B cell (primary cell): ENCODE measurements at regions of chr11 and their contacts with region 1.

Region 1: DNA sequence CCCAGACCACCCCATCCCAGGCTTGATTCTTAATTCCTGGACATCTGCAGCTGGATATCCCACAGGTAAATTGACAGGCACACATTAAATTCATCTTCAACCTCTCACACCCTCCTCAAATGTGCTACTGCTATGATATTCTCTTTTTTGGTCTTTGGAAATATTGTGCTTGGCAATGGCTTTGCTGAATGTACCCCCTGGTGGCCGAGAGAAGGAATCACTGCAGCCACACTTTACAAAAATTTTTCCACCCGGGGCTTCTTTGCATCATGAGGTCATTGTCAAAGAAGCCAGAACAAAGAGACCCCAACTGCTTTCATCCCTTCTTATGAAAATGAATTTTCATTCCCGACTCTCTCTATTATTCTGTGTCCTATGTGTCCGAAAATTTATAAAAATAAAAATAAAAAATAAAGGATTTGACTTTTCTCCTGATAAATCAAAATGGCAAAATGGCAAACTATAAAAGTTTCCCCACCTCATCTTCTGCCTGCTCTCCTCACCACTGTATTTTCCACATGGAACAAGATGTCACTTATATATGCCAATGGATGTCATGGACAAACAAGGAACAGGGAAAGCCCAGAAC is 15.0 kb upstream of the CYB5R2 start:
- DNase-seq: peak; percentile 48
- ATAC-seq: peak; percentile 54
- H3K4me3 ChIP-seq: no peak overlapping the region
- H3K4me3 Mint-ChIP-seq: no peak overlapping the region
- H3K27ac ChIP-seq: no peak overlapping the region
- H3K27ac Mint-ChIP-seq: no peak overlapping the region
- H3K4me1 ChIP-seq: no peaks in the 10 kb centered on the region
- H3K4me1 Mint-ChIP-seq: no peaks in the 10 kb centered on the region
- H3K27me3 ChIP-seq: peaks cover 0 to 5% (median 3%) of the 10 kb centered on the region in 4 experiments
- H3K27me3 Mint-ChIP-seq: peaks cover 31% of the 10 kb centered on the region
- CTCF ChIP-seq: peak; percentile 90

Region 2: DNA sequence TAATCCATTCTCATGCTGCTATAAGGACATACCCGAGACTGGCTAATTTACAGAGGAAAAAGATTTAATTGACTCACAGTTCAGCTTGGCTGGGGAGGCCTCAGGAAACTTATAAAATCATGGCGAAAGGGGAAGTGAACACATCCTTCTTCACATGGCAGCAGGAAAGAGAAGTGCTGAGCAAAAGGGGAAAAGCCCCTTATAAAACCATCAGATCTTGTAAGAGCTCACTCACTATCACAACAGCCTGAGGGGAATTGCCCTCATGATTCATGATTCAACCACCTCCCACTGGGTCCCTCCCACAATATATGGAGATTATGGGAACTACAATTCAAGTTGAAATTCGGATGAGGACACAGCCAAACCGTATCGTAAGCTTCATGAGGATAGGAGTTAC is 11.3 kb before region 1 on chr11:
- CTCF ChIA-PET with region 1: interaction called, 13 read pairs
- POLR2A ChIA-PET with region 1: no interaction called
- intact Hi-C with region 1: no loop called
- DNase-seq: no peak
- ATAC-seq: no peak
- H3K4me3 ChIP-seq: no peak overlapping the region
- H3K4me3 Mint-ChIP-seq: no peak overlapping the region
- H3K27ac ChIP-seq: no peak overlapping the region
- H3K27ac Mint-ChIP-seq: no peak overlapping the region
- H3K4me1 ChIP-seq: peaks cover 17 to 22% of the 10 kb centered on the region in 2 donors
- H3K4me1 Mint-ChIP-seq: peaks cover 22% of the 10 kb centered on the region
- H3K27me3 ChIP-seq: peaks cover 0 to 49% (median 20%) of the 10 kb centered on the region in 4 experiments
- H3K27me3 Mint-ChIP-seq: peaks cover 50% of the 10 kb centered on the region
- CTCF ChIP-seq: no peak